ENCODE measurements at regions of chr9 and their contacts with region 1.

Region 1: DNA sequence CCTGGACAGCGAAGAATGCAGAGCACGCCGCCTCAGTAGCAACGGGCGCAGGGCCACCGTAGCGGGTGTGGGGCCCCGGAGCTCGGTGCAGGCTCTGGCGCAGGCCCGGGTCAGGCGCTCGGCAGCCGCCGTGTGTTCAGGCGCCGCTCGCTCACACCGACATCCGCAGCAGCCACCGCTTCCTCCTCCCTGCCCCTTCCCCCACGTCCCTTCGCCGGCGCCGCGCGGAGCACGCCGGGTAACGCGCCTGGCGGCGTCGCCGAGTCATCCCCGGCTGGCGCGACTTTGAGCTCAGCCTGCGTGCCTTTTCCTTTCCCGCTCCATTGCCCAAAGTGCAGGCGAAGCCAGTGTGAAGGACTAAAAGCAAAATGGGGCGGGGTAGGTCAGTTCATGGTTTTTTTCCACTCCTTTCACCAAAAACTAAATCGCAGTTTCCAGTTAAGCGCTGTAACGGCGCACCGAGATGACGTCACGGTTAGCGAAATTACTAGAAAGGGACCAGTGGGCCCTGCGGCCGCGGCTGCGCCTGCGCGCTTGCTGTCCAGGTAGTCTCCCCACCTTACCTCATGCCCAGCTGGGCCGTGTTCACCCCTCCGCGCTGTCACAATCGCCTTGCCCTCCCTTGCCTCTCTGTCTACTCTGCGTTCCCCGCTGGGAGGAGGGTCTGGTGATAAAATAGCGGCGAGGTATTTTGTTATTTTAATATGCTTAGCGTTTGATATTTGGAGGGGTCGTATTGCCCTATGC is at the start of gene UBQLN1:
- DNase-seq: peak; percentile 97
- CTCF ChIP-seq: no peak

Region 2: DNA sequence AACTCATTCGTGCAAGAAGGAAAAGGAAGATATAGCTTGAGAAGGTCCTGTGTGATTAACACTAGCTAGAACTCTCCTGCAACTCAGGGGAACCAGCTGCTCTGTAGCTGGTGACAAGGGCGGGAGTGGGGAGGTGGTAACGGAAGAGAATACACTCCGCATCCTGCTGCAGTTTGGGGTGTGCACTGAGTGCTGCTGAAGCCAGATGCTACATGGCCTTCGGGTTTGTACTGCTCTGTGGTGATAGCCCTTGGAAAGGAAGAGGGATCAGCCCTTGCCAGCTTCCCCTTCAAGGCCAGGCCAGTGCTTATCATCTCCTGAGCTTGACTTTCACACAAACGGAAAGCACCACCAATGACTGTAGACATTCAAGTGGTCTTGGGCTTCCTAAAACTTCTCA is 204.1 kb before region 1 on chr9:
- CTCF ChIA-PET with region 1: no interaction called
- POLR2A ChIA-PET with region 1: no interaction called
- DNase-seq: no peak
- CTCF ChIP-seq: no peak

Region 3: GRCh38 chr9:83514767-83515166 is 193.2 kb before region 1 on chr9:
- CTCF ChIA-PET with region 1: no interaction called
- POLR2A ChIA-PET with region 1: no interaction called
- DNase-seq: no peak
- CTCF ChIP-seq: no peak

Region 4: DNA sequence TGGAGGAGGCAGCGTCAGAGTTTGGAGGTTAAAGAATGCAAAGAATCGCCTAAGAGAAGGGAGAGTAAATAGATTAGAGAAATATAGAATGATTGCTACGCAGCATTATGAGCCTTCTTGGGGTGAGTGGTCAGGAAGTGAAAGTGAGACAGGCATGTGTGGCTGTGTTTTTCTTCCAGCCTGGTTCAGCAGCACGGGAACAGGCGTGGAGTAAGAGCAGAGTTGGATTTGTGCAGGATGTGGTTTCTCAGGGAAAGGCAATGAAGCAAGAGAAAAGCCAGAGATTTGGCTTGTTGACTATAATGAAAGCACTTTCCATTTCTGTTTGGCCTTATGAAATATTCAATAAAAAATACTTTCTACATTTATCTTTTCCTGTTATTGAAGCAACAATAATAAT is 135.4 kb before region 1 on chr9:
- CTCF ChIA-PET with region 1: no interaction called
- POLR2A ChIA-PET with region 1: no interaction called
- DNase-seq: no peak
- CTCF ChIP-seq: no peak

Region 5: DNA sequence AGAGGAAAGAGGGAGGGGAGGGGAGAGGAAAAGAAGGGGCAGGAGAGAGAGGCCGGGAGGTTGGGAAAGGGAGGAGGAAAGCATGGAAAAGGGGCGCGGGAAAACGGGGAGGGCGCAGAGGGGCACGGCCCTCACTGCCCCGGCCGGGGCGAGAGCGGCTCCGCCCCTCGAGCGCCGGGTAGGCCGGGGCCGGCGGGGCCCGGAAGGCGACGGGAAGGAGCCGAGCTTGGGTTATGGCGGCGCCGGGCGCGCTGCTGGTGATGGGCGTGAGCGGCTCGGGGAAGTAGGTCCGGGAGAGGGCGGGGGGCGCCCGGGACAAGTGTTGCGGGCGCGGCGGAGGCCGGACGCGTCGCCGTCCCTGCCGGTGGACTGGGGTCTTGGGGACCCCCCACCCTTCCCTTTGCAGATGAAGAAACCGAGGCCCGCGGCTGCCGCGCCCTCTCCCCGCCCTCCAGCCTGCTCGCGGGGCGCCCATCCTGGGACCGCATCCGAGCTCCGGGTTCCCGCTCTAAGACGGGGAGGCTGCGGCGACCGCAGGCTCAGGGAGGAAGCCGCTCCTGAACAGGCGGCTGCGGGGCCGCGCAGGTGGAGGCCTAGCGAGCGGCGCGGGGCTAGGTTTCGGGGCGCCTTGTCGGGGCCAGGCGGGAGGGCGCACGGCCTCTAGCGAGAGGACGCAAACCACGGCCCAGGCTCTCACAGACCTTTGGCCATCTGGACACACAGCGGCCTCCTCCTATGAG is 84.8 kb before region 1 on chr9 and contains the start of gene IDNK:
- CTCF ChIA-PET with region 1: interaction called, 13 read pairs
- POLR2A ChIA-PET with region 1: interaction called, 3 read pairs
- DNase-seq: peak; percentile 82
- CTCF ChIP-seq: no peak

Region 6: GRCh38 chr9:83656032-83656680 is 51.8 kb before region 1 on chr9:
- CTCF ChIA-PET with region 1: interaction called, 11 read pairs
- POLR2A ChIA-PET with region 1: no interaction called
- DNase-seq: peak; percentile 18
- CTCF ChIP-seq: no peak

Region 7: GRCh38 chr9:83688921-83689320 is 19.0 kb before region 1 on chr9:
- CTCF ChIA-PET with region 1: interaction called, 13 read pairs
- POLR2A ChIA-PET with region 1: no interaction called
- DNase-seq: no peak
- CTCF ChIP-seq: no peak

Region 8: GRCh38 chr9:83765376-83765775 is 57.4 kb after region 1 on chr9:
- CTCF ChIA-PET with region 1: no interaction called
- POLR2A ChIA-PET with region 1: no interaction called
- DNase-seq: no peak
- CTCF ChIP-seq: no peak

Measured in GM10248 (cell line).